ENCODE measurements at regions of chr17 and their contacts with region 1.

Region 1: GRCh38 chr17:40355123-40355803 is 9.3 kb downstream of the GJD3 start:
- DNase-seq: peak; percentile 79
- ATAC-seq: peak; percentile 72
- H3K4me3 Mint-ChIP-seq: no peak overlapping the region
- H3K27ac Mint-ChIP-seq: no peak overlapping the region
- H3K4me1 Mint-ChIP-seq: peaks cover 44% of the 10 kb centered on the region
- H3K27me3 Mint-ChIP-seq: peaks cover 4% of the 10 kb centered on the region

Region 2: GRCh38 chr17:40203131-40203530 is 152.1 kb before region 1 on chr17:
- CTCF ChIA-PET with region 1: interaction called, 13 read pairs
- POLR2A ChIA-PET with region 1: no interaction called
- DNase-seq: no peak
- ATAC-seq: no peak
- H3K4me3 Mint-ChIP-seq: no peak overlapping the region
- H3K27ac Mint-ChIP-seq: no peak overlapping the region
- H3K4me1 Mint-ChIP-seq: peaks cover 9% of the 10 kb centered on the region
- H3K27me3 Mint-ChIP-seq: peaks cover 4% of the 10 kb centered on the region

Region 3: GRCh38 chr17:40230670-40231069 is 124.6 kb before region 1 on chr17:
- CTCF ChIA-PET with region 1: no interaction called
- POLR2A ChIA-PET with region 1: no interaction called
- DNase-seq: no peak
- ATAC-seq: no peak
- H3K4me3 Mint-ChIP-seq: no peak overlapping the region
- H3K27ac Mint-ChIP-seq: peak overlapping the region; percentile 28
- H3K4me1 Mint-ChIP-seq: no peaks in the 10 kb centered on the region
- H3K27me3 Mint-ChIP-seq: no peaks in the 10 kb centered on the region

Region 4: DNA sequence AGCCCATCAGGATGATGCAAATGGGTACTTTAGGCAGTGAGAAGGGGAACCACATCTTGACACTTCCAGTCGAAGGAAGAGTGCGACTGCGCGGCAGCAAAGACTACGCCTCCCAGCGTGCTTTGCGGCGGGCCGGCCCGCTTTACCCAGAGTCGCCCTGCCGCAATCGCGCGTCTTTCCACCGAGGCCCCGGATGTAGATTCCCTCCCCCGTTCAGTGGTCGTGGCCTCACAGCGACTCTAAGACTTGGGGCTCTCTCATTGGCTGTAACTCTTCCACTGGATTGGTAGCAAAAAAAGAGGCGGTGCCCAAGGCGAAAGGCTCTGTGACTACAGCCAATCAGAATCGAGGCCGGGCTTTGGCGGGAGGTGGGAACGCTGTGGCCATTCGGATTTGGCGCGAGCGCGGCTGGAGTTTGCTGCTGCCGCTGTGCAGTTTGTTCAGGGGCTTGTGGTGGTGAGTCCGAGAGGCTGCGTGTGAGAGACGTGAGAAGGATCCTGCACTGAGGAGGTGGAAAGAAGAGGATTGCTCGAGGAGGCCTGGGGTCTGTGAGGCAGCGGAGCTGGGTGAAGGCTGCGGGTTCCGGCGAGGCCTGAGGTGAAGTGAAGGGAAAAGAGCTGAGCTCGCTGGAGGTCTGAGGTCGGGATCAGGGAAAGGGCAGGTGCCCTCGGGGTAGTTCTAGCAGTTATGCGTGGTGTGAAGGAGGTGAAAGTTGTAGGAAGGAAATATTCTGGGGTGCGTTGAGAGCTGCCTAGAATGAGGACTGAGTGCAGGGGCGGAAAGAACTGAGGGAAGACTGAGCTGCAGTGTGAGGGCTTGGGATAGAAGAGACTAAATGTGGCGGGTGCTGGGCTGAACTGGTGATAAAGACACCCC is 67.5 kb before region 1 on chr17 and contains the start of gene CDC6:
- CTCF ChIA-PET with region 1: interaction called, 51 read pairs
- POLR2A ChIA-PET with region 1: interaction called, 3 read pairs
- DNase-seq: peak; percentile 100
- ATAC-seq: peak; percentile 96
- H3K4me3 Mint-ChIP-seq: peak within 1 kb of the TSS; percentile 98
- H3K27ac Mint-ChIP-seq: peak within 1 kb of the TSS; percentile 97
- H3K4me1 Mint-ChIP-seq: peaks cover 45% of the 10 kb centered on the region
- H3K27me3 Mint-ChIP-seq: no peaks in the 10 kb centered on the region
- total RNA-seq, gene CDC6: 103 to 110 TPM

Region 5: GRCh38 chr17:40295488-40296436 is 59.5 kb before region 1 on chr17:
- CTCF ChIA-PET with region 1: interaction called, 304 read pairs
- POLR2A ChIA-PET with region 1: interaction called, 3 read pairs
- DNase-seq: no peak
- ATAC-seq: no peak
- H3K4me3 Mint-ChIP-seq: no peak overlapping the region
- H3K27ac Mint-ChIP-seq: peak overlapping the region; percentile 47
- H3K4me1 Mint-ChIP-seq: peaks cover 22% of the 10 kb centered on the region
- H3K27me3 Mint-ChIP-seq: no peaks in the 10 kb centered on the region

Region 6: DNA sequence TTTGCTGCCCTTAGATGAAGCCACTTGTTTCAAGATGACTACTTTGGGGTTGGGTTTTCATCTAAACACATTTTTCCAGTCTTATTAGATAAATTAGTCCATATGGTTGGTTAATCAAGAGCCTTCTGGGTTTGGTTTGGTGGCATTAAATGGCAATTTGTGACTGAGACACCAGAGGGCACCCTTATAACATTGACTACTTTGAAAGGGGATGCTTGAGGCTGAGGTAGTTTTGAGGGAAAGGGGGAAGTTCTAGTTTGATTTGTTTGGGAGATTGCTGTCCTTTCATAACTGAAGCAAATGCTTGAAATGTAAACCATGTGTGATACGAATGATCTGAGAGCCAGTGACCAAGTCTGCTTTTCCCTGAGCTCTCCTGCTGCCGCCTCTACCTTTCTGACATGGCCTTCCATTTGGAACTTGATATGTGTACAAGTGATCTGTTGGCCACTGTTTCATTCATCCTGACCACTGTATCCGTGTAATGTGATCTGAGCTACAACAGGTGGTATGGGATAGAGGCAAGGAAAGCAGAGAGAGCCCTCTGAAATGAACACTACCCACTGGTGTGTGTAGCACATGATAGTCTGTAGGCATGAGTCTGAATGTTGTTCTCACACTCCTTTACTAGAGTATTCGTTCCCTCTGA is 52.1 kb before region 1 on chr17:
- CTCF ChIA-PET with region 1: interaction called, 304 read pairs
- POLR2A ChIA-PET with region 1: interaction called, 6 read pairs
- DNase-seq: peak; percentile 63
- ATAC-seq: no peak
- H3K4me3 Mint-ChIP-seq: no peak overlapping the region
- H3K27ac Mint-ChIP-seq: no peak overlapping the region
- H3K4me1 Mint-ChIP-seq: peaks cover 18% of the 10 kb centered on the region
- H3K27me3 Mint-ChIP-seq: no peaks in the 10 kb centered on the region

Region 7: DNA sequence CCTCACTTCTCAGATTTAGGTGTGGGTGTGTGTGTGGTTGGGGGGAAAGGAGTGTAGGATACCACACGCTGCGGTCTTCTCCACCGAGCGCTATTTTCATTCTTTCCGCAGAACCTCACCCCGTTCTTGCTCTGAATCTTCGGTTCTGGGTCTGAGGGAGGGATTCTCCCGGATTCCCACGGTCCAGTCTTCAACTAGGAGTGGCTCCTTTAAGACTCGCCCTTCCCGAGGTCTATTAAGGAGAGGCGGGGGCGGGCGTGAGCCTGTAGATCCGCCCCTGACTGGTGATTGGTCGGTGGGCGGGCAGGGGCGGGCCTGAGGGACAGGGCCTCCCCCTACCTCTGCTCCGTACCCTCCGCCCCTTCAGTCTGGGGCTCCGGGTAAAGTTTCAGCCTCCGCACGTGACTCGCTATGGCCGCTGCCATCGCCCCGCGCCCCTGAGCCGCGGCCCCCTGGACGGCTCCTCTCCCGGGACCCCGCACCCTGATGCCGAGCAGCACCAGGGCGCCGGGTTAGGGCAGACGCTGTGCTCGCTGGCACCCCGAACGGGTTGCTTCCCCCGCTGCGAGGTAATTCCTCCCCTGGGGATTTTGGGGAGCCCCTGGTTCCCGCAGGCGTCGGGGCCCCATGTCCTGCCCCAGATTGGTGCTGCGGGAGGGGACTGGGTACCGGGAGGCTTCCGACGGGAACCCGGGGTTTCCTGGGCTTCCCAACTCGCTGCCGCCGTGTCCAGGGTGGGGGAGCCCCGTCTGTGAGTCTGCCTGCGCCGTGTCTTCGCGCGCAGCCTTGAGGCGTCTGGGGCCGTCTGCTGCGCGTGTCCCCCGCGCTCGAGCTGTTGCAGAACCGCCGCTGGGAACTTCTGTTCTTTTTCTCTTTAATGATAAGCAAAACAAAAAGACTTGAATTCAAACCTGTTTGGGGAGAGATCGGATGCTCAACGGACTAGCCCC is 37.1 kb before region 1 on chr17:
- CTCF ChIA-PET with region 1: interaction called, 54 read pairs
- POLR2A ChIA-PET with region 1: interaction called, 3 read pairs
- DNase-seq: peak; percentile 94
- ATAC-seq: peak; percentile 66
- H3K4me3 Mint-ChIP-seq: peak overlapping the region; percentile 95
- H3K27ac Mint-ChIP-seq: peak overlapping the region; percentile 98
- H3K4me1 Mint-ChIP-seq: peaks cover 67% of the 10 kb centered on the region
- H3K27me3 Mint-ChIP-seq: no peaks in the 10 kb centered on the region

Region 8: GRCh38 chr17:40340880-40341807 is 14.1 kb before region 1 on chr17:
- CTCF ChIA-PET with region 1: interaction called, 16 read pairs
- POLR2A ChIA-PET with region 1: no interaction called
- DNase-seq: peak; percentile 92
- ATAC-seq: peak; percentile 83
- H3K4me3 Mint-ChIP-seq: peak overlapping the region; percentile 73
- H3K27ac Mint-ChIP-seq: peak overlapping the region; percentile 90
- H3K4me1 Mint-ChIP-seq: peaks cover 86% of the 10 kb centered on the region
- H3K27me3 Mint-ChIP-seq: no peaks in the 10 kb centered on the region

Region 9: GRCh38 chr17:40632216-40632615 is 277.0 kb after region 1 on chr17:
- CTCF ChIA-PET with region 1: no interaction called
- POLR2A ChIA-PET with region 1: no interaction called
- DNase-seq: no peak
- ATAC-seq: no peak
- H3K4me3 Mint-ChIP-seq: no peak overlapping the region
- H3K27ac Mint-ChIP-seq: no peak overlapping the region
- H3K4me1 Mint-ChIP-seq: peaks cover 2% of the 10 kb centered on the region
- H3K27me3 Mint-ChIP-seq: no peaks in the 10 kb centered on the region